PC-3 (cell line): ENCODE measurements at regions of chr1 and their contacts with region 1.

Region 1: GRCh38 chr1:46132529-46133180 is at the start of gene PIK3R3:
- DNase-seq: peak; percentile 98
- ATAC-seq: peak; percentile 86
- H3K4me3 ChIP-seq: peak within 1 kb of the TSS; percentile 95
- H3K27ac ChIP-seq: peak within 1 kb of the TSS; percentile 94
- H3K4me1 ChIP-seq: peaks cover 49% of the 10 kb centered on the region
- H3K27me3 ChIP-seq: no peaks in the 10 kb centered on the region
- CTCF ChIP-seq: no peak
- total RNA-seq, gene PIK3R3: 17.7 and 18.5 TPM in 2 replicates

Region 2: DNA sequence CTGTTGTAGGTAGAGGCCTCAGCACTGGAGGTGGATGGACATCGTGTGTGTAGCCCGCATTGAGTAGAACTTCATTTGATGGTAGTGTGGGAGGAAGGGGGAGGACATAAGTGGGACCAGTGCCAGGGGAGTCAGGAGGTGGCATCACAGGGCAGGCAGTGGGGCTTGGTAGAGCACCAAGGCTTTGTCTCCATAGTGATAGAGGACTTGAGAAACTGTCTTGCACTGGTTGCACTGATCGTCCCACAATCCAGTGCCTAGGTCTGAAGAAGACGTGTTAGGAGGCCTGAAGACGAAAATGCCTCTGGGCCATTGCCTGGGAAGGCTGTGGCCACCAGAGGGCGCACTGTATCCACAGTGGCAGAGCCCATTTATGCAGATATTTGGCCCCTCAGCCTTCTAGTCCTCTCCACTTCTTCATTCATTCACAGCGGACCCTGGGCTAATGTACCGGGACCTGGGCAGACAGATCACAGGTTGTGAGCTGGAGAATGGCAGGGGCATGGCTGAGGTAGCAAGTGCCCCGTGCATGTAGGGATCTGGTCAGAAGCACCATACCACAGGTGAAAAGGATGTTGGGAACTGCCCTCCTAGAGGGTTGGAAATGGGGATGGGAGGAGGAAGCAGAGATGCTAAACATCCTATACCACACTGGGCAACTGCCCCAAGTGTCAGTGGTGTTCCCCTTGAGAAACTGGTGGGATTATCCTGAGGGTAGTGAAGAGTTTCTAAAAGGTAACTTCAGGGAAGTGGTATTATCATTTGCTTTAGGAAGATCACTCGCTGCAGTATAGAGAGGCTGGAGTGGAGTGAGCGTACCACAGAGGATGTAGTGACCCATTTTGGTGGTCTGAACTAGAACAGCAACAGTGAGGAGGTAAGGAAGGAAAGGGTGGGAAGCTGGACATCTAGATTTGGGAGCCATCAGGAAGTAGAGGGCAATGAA is 95.5 kb before region 1 on chr1:
- CTCF ChIA-PET with region 1: interaction called, 3 read pairs
- POLR2A ChIA-PET with region 1: interaction called, 10 read pairs
- intact Hi-C with region 1: loop called (anchors 1 kb)
- DNase-seq: peak; percentile 91
- ATAC-seq: peak; percentile 57
- H3K4me3 ChIP-seq: no peak overlapping the region
- H3K27ac ChIP-seq: no peak overlapping the region
- H3K4me1 ChIP-seq: peaks cover 17% of the 10 kb centered on the region
- H3K27me3 ChIP-seq: no peaks in the 10 kb centered on the region
- CTCF ChIP-seq: peak; percentile 98

Region 3: DNA sequence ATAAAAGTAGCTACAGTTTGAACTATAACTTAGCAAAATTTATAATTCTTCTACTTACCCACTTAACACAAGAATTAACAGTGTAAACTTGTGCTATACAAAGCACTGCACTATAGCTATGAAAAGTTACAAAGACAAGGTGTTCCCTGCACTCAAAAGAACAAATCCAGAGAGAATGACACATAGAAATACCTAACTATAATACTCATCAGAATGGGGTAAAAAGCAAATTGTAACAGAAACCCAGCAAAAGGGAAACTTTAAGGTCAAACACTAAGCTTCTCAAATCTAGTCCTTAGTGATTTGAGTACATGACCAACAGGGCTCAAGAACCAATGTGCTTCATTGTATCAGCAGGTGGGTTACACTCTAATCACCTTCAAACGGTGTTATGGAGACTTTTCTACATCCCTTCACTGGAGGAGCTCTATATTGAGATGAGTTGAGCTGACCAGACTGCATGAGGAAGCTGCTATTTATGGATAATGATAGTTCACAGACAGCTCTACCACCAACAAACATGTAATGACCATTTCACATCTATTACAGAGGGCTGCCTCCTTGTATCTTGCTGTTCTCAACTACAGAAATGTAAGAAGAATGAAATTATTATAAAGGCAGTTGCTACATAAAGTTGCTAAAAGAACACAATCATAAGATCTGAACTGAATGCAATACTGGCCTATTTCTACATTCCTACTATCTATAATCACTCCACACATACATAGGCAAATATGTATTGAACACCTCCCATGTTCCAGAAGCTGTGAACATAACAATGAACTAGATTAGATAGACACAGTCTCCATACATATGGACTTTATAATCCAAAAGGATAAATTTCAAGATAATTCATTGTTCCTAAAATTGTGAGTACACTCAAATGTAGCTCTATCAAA is 47.9 kb before region 1 on chr1:
- CTCF ChIA-PET with region 1: no interaction called
- POLR2A ChIA-PET with region 1: interaction called, 6 read pairs
- intact Hi-C with region 1: loop called (anchors 1 kb)
- DNase-seq: peak; percentile 70
- ATAC-seq: peak; percentile 93
- H3K4me3 ChIP-seq: peak overlapping the region; percentile 27; the same call in 1 of the 2 replicates
- H3K27ac ChIP-seq: peak overlapping the region; percentile 59
- H3K4me1 ChIP-seq: peaks cover 28% of the 10 kb centered on the region
- H3K27me3 ChIP-seq: no peaks in the 10 kb centered on the region
- CTCF ChIP-seq: no peak

Region 4: DNA sequence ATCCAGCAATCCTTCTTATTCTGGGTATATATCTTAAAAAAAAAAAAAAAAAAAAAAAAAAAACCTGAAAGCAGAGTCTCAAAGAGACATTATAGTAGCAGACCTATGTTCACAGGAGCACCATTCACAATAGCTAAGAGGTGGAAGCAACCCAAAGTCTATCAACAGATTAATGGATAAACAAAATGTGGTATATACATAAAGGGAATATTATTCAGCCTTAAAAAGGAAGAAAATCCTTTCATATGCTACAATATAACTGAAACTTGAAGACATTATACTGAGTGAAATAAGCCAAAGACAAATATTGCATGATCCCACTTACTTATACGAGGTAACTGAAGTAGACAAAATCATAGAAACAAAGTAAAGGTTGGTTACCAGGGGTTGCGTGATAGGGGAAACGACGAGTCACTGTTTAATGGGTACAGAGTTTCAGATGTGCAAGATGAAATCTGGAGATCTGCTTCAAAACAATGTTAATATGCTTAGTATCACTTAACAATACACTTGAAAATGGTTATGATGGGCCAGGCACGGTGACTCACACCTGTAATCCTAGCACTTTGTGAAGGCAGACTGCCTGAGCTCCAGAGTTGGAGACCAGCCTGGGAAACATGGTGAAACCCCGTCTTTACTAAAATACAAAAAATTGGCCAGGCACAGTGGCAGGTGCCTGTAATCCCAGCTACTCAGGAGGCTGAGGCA is 29.7 kb before region 1 on chr1:
- CTCF ChIA-PET with region 1: no interaction called
- POLR2A ChIA-PET with region 1: interaction called, 5 read pairs
- intact Hi-C with region 1: loop called (anchors 1 kb)
- DNase-seq: peak; percentile 75
- ATAC-seq: peak; percentile 94
- H3K4me3 ChIP-seq: no peak overlapping the region
- H3K27ac ChIP-seq: peak overlapping the region; percentile 81
- H3K4me1 ChIP-seq: peaks cover 7% of the 10 kb centered on the region; the same call in 1 of the 2 replicates
- H3K27me3 ChIP-seq: no peaks in the 10 kb centered on the region
- CTCF ChIP-seq: no peak